GM10248 (cell line): ENCODE measurements at regions of chr1 and their contacts with region 1.

Region 1: GRCh38 chr1:66242646-66243547 is 291.1 kb upstream of the SGIP1 start:
- DNase-seq: peak; percentile 64
- CTCF ChIP-seq: peak; percentile 100

Region 2: DNA sequence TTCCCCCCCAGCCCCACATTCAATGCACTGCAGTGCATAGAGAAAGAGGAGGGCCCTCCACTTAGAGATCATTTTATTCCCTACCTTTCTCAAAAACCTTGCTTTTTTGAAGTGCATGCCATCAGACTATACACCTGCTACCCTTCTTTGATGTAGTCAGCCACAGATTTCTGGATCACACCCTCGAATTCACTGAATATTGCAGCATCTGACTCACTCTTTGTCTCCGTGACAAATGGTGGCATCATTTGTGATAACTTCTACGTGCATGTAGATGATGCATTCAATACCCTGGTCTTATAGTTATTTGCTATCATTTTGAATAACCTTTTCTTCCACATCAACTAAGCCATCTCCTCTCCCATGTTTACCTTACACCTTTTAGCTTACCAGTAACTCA is 19.2 kb before region 1 on chr1:
- CTCF ChIA-PET with region 1: interaction called, 32 read pairs
- POLR2A ChIA-PET with region 1: no interaction called
- DNase-seq: no peak
- CTCF ChIP-seq: no peak

Region 3: GRCh38 chr1:66253330-66253921 is 10.5 kb after region 1 on chr1:
- CTCF ChIA-PET with region 1: interaction called, 41 read pairs
- POLR2A ChIA-PET with region 1: no interaction called
- DNase-seq: peak; percentile 59
- CTCF ChIP-seq: peak; percentile 75

Region 4: DNA sequence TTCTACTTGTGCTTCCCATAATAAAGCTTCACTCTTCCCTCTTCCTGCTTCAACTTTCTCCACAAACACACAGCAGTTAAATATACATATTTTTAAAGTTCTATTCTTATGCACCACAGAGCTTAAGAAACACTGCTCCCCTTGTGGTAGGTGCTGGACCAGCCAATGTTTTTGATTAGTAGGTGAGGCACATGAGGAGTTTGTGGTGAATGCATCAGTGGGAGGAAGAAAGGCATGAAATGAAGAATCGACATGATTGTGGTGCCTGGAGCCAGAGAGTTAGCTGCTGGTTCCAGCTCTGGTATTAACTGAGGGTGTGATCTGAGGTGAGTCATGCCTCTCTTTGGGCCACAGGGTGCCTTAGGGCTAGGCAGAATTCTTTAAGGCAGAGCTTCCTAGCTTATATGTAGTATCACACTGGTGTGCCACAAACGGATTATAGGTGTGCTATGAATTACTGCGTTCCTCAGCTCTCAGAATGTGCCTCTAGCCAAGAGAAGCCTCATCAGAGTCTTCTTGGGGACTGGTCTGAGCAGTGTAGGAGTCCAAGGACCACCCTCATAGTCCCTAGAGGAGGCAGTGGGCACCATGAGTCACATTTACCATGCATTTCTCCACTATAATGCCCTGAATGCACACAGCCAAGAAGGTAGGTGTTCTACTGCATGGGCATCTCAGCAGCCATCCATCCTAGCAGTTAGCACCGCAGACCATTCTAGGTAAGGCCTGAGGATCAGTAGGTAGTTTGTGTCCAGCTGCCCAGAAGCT is 193.7 kb after region 1 on chr1:
- CTCF ChIA-PET with region 1: interaction called, 16 read pairs
- POLR2A ChIA-PET with region 1: interaction called, 3 read pairs
- DNase-seq: peak; percentile 29
- CTCF ChIP-seq: peak; percentile 14

Region 5: DNA sequence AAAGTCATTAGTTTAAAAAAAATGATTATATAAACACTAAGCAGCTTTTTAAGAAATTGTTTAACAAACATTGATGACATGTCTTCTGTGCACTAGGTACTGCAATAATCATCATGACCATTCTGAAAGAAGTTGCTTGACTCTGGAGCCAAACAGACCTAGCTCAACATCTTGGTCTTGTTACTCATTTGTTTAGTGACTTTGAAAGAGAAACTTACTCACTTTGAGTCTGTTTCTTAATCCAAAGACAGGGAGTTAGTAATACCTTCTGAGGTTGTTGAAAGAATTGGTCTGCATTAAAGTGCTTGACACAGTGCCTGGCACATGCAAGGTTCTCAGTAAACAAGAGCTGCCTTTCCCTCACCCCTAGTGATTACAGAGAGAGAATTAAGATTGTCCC is 375.5 kb after region 1 on chr1:
- CTCF ChIA-PET with region 1: no interaction called
- POLR2A ChIA-PET with region 1: no interaction called
- DNase-seq: no peak
- CTCF ChIP-seq: no peak